Calu3 (cell line): ENCODE measurements at regions of chr1 and their contacts with region 1.

Region 1: GRCh38 chr1:153352523-153352922 is 3.9 kb upstream of the PGLYRP4 start:
- DNase-seq: peak; percentile 73
- H3K4me3 Mint-ChIP-seq: no peak overlapping the region
- H3K27ac Mint-ChIP-seq: no peak overlapping the region
- H3K4me1 Mint-ChIP-seq: peaks cover 26% of the 10 kb centered on the region
- H3K27me3 Mint-ChIP-seq: peaks cover 65% of the 10 kb centered on the region
- CTCF ChIP-seq: peak; percentile 93

Region 2: GRCh38 chr1:153404768-153405167 is 52.2 kb after region 1 on chr1:
- CTCF ChIA-PET with region 1: interaction called, 3 read pairs
- intact Hi-C with region 1: loop called (anchors 1 kb)
- DNase-seq: peak; percentile 58
- H3K4me3 Mint-ChIP-seq: no peak overlapping the region
- H3K27ac Mint-ChIP-seq: no peak overlapping the region
- H3K4me1 Mint-ChIP-seq: no peaks in the 10 kb centered on the region
- H3K27me3 Mint-ChIP-seq: peaks cover 99% of the 10 kb centered on the region
- CTCF ChIP-seq: peak; percentile 68

Region 3: GRCh38 chr1:153494976-153495535 is 142.5 kb after region 1 on chr1:
- CTCF ChIA-PET with region 1: interaction called, 58 read pairs
- intact Hi-C with region 1: loop called (anchors 1 kb)
- DNase-seq: peak; percentile 91
- H3K4me3 Mint-ChIP-seq: no peak overlapping the region
- H3K27ac Mint-ChIP-seq: no peak overlapping the region
- H3K4me1 Mint-ChIP-seq: peaks cover 8% of the 10 kb centered on the region
- H3K27me3 Mint-ChIP-seq: peaks cover 71% of the 10 kb centered on the region
- CTCF ChIP-seq: peak; percentile 97

Region 4: DNA sequence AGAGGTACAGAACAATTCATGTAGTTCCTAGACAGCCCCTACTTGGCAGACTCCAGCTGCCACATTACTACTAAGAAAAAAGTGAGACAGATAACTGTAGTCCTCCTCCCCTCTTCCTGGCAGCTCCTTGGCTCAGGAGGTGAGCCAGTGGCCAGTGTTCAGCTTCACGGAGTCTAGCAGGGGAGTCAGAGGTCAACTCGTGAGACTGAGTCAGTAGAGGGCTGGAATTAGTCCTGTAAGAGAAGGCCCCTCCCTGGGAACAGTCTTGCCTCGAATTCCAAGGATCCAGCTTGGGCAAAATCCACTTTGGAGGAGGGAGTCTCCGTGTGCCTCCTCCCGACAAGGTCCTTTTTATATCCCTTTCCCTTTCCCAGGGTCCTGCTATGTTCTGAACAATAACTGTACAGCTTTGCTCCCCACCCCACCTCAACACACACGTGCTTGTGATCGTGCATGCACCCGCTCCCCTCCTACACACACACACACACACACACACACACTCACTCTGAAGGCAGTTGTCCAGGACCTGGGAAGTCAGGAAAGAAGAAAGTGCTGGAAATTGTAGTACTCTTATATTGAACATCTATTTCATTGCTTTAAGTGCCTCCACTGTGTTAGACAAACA is 400.2 kb after region 1 on chr1:
- CTCF ChIA-PET with region 1: no interaction called
- intact Hi-C with region 1: no loop called
- DNase-seq: no peak
- H3K4me3 Mint-ChIP-seq: no peak overlapping the region
- H3K27ac Mint-ChIP-seq: no peak overlapping the region
- H3K4me1 Mint-ChIP-seq: no peaks in the 10 kb centered on the region
- H3K27me3 Mint-ChIP-seq: no peaks in the 10 kb centered on the region
- CTCF ChIP-seq: no peak